ENCODE measurements at regions of chr3 and their contacts with region 1.

Region 1: DNA sequence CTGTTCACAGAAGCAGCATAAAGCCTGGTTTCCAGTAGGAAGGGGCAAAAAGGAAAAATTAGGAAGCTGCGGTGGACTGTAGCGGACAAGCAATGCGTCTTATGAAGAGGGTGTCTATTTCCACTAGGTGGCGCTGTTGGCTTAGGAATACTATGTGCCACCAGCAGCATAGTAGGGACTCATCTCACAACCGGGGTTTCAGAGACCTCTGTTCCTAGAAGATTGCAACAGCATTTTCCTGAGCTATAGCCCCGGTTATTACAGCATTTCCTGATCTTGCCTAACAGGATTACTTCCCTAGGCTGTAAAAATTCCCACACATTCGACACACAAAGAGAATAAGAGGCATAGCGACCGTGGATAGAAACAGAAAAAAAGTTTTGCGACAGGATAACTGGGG is 683.0 kb downstream of the TBL1XR1 start:
- DNase-seq: peak in 1 of 2 donors; percentile 22
- ATAC-seq: peak in 2 of 8 donors; percentile 46 to 49
- H3K4me3 ChIP-seq: no peak overlapping the region
- H3K27ac ChIP-seq: no peak overlapping the region
- H3K4me1 ChIP-seq: no peaks in the 10 kb centered on the region
- H3K27me3 ChIP-seq: no peaks in the 10 kb centered on the region
- CTCF ChIP-seq: peak; percentile 29 to 72 (median 54)

Region 2: GRCh38 chr3:176310641-176311040 is 203.7 kb before region 1 on chr3:
- intact Hi-C with region 1: no loop called
- DNase-seq: no peak
- ATAC-seq: no peak
- H3K4me3 ChIP-seq: no peak overlapping the region
- H3K27ac ChIP-seq: no peak overlapping the region
- H3K4me1 ChIP-seq: no peaks in the 10 kb centered on the region
- H3K27me3 ChIP-seq: no peaks in the 10 kb centered on the region
- CTCF ChIP-seq: no peak

Region 3: GRCh38 chr3:176426371-176426770 is 87.9 kb before region 1 on chr3:
- intact Hi-C with region 1: no loop called
- DNase-seq: no peak
- ATAC-seq: no peak
- H3K4me3 ChIP-seq: no peak overlapping the region
- H3K27ac ChIP-seq: no peak overlapping the region
- H3K4me1 ChIP-seq: no peaks in the 10 kb centered on the region
- H3K27me3 ChIP-seq: no peaks in the 10 kb centered on the region
- CTCF ChIP-seq: no peak

Region 4: GRCh38 chr3:176663837-176664831 is 149.8 kb after region 1 on chr3:
- intact Hi-C with region 1: loop called in 1 of 10 experiments (anchors 10 kb)
- DNase-seq: no peak
- ATAC-seq: peak in 7 of 8 donors; percentile 43 to 78 (median 55)
- H3K4me3 ChIP-seq: no peak overlapping the region
- H3K27ac ChIP-seq: no peak overlapping the region
- H3K4me1 ChIP-seq: peaks cover 0 to 17% (median 5%) of the 10 kb centered on the region in 9 donors
- H3K27me3 ChIP-seq: no peaks in the 10 kb centered on the region
- CTCF ChIP-seq: peak in 7 of 9 donors; percentile 25 to 58 (median 50)

Region 5: DNA sequence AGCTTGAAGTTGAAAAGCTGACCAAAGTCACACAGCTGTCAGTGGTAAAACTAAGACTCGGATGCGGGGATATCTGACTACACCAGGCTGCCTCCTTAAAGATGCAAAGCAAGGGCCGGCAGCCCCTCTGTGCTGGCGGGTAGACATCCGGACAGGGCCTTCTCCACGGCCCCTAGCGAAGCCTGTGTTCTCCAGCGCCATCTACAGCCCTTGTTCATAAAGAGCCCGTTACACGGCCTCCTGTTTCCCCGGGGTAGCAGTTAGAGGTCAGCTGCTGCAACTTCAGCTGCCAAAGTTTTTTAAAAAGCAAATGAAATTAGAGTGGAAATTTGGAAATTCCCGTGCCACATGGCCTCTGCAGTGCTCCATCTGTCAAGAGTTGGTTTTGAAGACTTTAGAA is 300.0 kb after region 1 on chr3:
- intact Hi-C with region 1: loop called in 2 of 10 experiments (anchors 5 to 10 kb)
- DNase-seq: peak; percentile 47 to 59
- ATAC-seq: peak; percentile 72 to 92 (median 84)
- H3K4me3 ChIP-seq: no peak overlapping the region
- H3K27ac ChIP-seq: no peak overlapping the region
- H3K4me1 ChIP-seq: peaks cover 0 to 7% (median 0%) of the 10 kb centered on the region in 9 donors
- H3K27me3 ChIP-seq: no peaks in the 10 kb centered on the region
- CTCF ChIP-seq: peak; percentile 34 to 69 (median 64)

Region 6: DNA sequence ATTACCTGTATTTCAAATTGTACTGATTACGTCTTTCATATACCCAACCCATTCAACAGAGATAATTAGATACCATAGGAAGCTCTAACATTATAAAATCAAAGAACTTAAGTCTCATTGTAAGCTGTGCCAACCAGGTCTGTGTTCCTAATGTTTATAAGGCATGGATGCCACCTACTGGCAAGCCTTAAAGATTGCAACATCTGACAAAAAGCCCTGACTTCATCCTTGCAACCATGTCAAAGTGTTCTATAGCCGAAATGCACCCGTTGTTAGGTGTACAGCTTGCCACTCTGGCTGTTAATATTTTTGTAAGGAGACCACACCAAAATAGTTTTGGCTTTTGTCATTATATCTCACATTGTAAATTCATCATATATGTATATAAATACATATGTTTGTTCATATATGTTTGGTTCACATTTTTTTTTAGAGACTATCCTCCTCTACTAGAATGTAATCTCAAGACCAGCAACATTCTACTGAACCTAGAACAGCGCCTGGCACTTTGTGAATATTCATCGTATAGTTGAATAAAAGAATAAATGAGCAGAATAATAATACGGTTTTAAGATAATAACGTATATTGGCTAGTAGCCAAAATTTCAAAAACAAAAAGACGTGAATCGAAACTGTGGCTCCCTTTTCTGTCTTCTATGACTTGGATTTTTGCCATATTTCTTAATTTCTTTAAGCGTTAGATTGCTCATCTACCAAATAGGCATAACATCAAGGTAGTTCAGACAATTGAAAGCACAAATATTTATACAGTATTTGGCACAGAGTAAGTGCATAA is 424.9 kb after region 1 on chr3:
- intact Hi-C with region 1: loop called in 4 of 10 experiments (anchors 5 to 10 kb)
- DNase-seq: peak in 1 of 2 donors; percentile 36
- ATAC-seq: peak in 7 of 8 donors; percentile 68 to 82 (median 76)
- H3K4me3 ChIP-seq: no peak overlapping the region
- H3K27ac ChIP-seq: no peak overlapping the region
- H3K4me1 ChIP-seq: peaks cover 0 to 5% (median 0%) of the 10 kb centered on the region in 9 donors
- H3K27me3 ChIP-seq: no peaks in the 10 kb centered on the region
- CTCF ChIP-seq: peak; percentile 58 to 85 (median 76)